AG04449 (cell line): ENCODE measurements at regions of chr19 and their contacts with region 1.

Region 1: GRCh38 chr19:13774217-13775191 is at the start of gene C19orf53:
- DNase-seq: peak; percentile 73
- H3K4me3 ChIP-seq: peak within 1 kb of the TSS; percentile 96
- CTCF ChIP-seq: no peak

Region 2: GRCh38 chr19:13748169-13748828 is 26.2 kb before region 1 on chr19:
- CTCF ChIA-PET with region 1: no interaction called
- POLR2A ChIA-PET with region 1: interaction called, 11 read pairs
- DNase-seq: no peak
- H3K4me3 ChIP-seq: peak overlapping the region; percentile 80
- CTCF ChIP-seq: no peak

Region 3: DNA sequence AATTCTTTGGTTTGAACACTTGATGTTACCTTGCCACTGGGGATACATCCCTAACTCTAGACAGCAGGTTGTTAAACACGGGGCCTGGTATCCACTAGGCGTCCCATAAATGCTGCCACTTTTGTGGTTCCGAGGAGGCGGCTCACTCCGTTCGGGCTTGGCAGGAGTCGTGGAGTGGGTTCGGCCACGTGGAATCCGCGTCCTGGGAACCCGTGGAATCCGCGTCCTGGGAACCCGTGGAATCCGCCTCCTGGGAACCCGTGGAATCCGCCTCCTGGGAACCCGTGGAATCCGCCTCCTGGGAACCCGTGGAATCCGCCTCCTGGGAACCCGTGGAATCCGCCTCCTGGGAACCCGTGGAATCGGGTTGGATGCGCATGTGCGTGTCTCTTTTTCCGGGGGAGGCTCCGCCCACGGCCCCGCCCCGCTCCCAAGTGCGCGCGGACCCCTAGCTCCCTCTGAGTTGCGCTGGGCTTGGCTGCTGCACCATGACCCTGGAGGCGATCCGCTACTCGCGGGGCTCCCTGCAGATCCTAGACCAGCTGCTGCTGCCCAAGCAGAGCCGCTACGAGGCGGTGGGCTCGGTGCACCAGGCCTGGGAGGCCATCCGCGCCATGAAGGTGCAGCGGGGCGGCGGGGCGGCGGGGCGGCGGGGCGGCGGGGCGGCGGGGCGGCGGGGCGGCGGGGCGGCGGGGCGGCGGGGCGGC is 10.2 kb before region 1 on chr19 and contains the start of gene MRI1:
- CTCF ChIA-PET with region 1: interaction called, 5 read pairs
- POLR2A ChIA-PET with region 1: interaction called, 14 read pairs
- DNase-seq: no peak
- H3K4me3 ChIP-seq: peak within 1 kb of the TSS; percentile 93
- CTCF ChIP-seq: no peak

Region 4: DNA sequence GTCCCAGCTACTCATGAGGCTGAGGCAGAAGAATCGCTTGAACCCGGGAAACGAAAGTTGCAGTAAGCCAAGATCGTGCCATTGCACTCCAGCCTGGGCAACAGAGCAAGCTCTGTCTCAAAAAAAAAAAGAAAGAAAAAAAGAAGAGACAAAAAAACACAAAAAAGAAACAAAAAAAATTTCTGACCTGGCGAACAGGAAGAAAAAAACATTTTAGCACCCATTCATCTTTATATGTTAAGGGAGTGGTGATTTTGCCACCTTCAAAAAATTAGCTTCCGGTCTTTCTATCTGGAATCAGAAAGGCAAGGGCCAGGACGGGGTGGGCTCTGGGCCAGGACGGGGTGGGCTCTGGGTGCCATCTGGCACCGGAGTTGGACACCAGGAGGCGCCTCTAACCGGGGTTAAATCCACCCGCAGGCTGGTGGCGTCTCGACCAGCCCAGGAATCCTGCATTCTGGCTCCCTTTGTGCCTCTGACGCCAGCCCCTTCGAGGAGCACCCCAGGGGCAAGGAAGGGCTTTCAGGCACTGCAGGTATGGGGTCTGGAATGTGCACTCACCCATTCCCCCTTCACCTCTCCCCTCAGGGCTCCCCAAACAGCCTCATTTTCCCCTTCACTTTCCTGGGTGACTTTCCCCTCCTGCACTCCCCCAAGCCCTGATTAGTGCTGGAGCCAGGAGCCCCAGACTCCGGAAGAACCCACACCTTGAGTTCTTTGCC is 10.4 kb after region 1 on chr19:
- CTCF ChIA-PET with region 1: interaction called, 4 read pairs
- POLR2A ChIA-PET with region 1: interaction called, 15 read pairs
- DNase-seq: no peak
- H3K4me3 ChIP-seq: no peak overlapping the region
- CTCF ChIP-seq: peak; percentile 78

Region 5: GRCh38 chr19:13794757-13795589 is 20.5 kb after region 1 on chr19 and contains the start of gene ZSWIM4:
- CTCF ChIA-PET with region 1: interaction called, 10 read pairs
- POLR2A ChIA-PET with region 1: interaction called, 4 read pairs
- DNase-seq: peak; percentile 95
- H3K4me3 ChIP-seq: peak within 1 kb of the TSS; percentile 94
- CTCF ChIP-seq: no peak

Region 6: DNA sequence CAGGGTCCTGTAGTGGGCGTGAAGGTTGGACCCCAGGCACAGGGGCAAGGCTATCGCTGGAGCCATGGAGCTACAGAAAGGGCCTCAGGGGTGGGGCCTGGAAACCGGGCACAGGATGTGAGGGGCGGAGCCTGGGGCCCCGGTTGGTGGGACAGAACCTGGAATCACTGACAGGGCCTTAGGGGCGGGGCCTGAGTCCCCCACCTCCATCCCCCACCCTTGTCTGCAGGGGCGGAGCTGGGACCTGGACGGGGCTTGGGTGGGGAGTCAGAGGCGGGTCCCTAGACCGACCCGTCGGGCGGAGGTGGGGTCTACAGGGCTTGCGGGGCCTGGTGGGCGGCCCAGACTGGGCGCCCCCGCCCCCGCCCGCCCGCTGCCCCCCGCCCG is 203.8 kb after region 1 on chr19:
- CTCF ChIA-PET with region 1: no interaction called
- POLR2A ChIA-PET with region 1: no interaction called
- DNase-seq: no peak
- H3K4me3 ChIP-seq: no peak overlapping the region
- CTCF ChIP-seq: no peak